CD8-positive, alpha-beta memory T cell (primary cell): ENCODE measurements at regions of chr12 and their contacts with region 1.

Region 1: GRCh38 chr12:116708826-116709756 is 28.8 kb downstream of the SPRING1 start:
- DNase-seq: peak; percentile 5 to 54 (median 21)
- H3K4me3 ChIP-seq: no peak overlapping the region
- H3K4me3 Mint-ChIP-seq: peak overlapping the region in 4 of 7 donors; percentile 51 to 80 (median 68)
- H3K27ac ChIP-seq: no peak overlapping the region
- H3K27ac Mint-ChIP-seq: peak overlapping the region in 3 of 8 donors; percentile 10 to 62 (median 49)
- H3K4me1 ChIP-seq: peaks cover 10% of the 10 kb centered on the region
- H3K4me1 Mint-ChIP-seq: peaks cover 10 to 25% (median 10%) of the 10 kb centered on the region in 3 donors
- H3K27me3 ChIP-seq: no peaks in the 10 kb centered on the region
- H3K27me3 Mint-ChIP-seq: no peaks in the 10 kb centered on the region

Region 2: GRCh38 chr12:115998119-115998633 is 710.9 kb before region 1 on chr12:
- CTCF ChIA-PET with region 1: interaction called, 12 read pairs
- POLR2A ChIA-PET with region 1: no interaction called
- DNase-seq: peak in 2 of 5 donors; percentile 12 to 31
- H3K4me3 ChIP-seq: no peak overlapping the region
- H3K4me3 Mint-ChIP-seq: no peak overlapping the region
- H3K27ac ChIP-seq: no peak overlapping the region
- H3K27ac Mint-ChIP-seq: peak overlapping the region in 1 of 8 donors; percentile 4
- H3K4me1 ChIP-seq: no peaks in the 10 kb centered on the region
- H3K4me1 Mint-ChIP-seq: peaks cover 0 to 7% (median 0%) of the 10 kb centered on the region in 3 donors
- H3K27me3 ChIP-seq: no peaks in the 10 kb centered on the region
- H3K27me3 Mint-ChIP-seq: no peaks in the 10 kb centered on the region

Region 3: GRCh38 chr12:116697305-116697704 is 11.8 kb before region 1 on chr12:
- CTCF ChIA-PET with region 1: interaction called, 13 read pairs
- POLR2A ChIA-PET with region 1: no interaction called
- DNase-seq: no peak
- H3K4me3 ChIP-seq: no peak overlapping the region
- H3K4me3 Mint-ChIP-seq: no peak overlapping the region
- H3K27ac ChIP-seq: no peak overlapping the region
- H3K27ac Mint-ChIP-seq: no peak overlapping the region
- H3K4me1 ChIP-seq: no peaks in the 10 kb centered on the region
- H3K4me1 Mint-ChIP-seq: peaks cover 0 to 5% (median 1%) of the 10 kb centered on the region in 3 donors
- H3K27me3 ChIP-seq: peaks cover 4% of the 10 kb centered on the region
- H3K27me3 Mint-ChIP-seq: peaks cover 15 to 38% of the 10 kb centered on the region in 2 donors